Common myeloid progenitor, CD34-positive (primary cell): ENCODE measurements at regions of chr3 and their contacts with region 1.

Region 1: GRCh38 chr3:88003115-88003755 is 55.6 kb downstream of the CGGBP1 start:
- DNase-seq: peak; percentile 77 to 81 (median 79)
- H3K4me3 ChIP-seq: no peak overlapping the region
- H3K27ac ChIP-seq: no peak overlapping the region
- H3K4me1 ChIP-seq: peaks cover 0 to 14% (median 13%) of the 10 kb centered on the region in 4 experiments
- H3K27me3 ChIP-seq: no peaks in the 10 kb centered on the region

Region 2: GRCh38 chr3:87260270-87260669 is 743.0 kb before region 1 on chr3:
- CTCF ChIA-PET with region 1: interaction called, 24 read pairs
- POLR2A ChIA-PET with region 1: no interaction called
- DNase-seq: peak; percentile 68 to 79 (median 73)
- H3K4me3 ChIP-seq: no peak overlapping the region
- H3K27ac ChIP-seq: no peak overlapping the region
- H3K4me1 ChIP-seq: peaks cover 0 to 2% (median 0%) of the 10 kb centered on the region in 4 experiments
- H3K27me3 ChIP-seq: no peaks in the 10 kb centered on the region

Region 3: DNA sequence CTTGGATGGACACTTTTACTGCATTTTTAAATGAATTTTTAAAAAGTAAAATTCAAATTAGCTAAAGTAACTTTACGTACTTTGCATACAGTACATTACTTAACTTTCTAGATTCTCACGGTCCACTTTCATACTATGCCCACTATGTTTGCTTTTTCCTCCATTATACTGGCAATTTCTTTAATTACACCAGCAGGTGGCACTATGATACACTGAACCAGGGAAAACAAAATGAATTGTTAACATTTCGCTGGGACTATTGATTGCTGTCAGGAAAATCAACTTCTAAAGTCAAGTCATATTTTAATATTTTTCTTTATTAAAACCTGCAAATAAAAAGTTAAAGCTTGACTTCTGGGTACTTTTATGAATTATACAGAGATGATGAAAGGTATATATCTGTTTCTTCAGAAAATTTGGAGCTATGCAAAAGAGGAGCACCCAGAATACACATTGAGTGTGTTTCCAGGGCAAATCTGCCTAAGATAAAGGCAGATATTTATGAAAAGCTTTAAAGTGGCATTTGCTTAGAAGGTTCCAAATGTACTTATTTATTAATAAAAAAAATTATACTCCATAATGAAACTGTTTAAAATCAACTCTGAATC is 705.0 kb before region 1 on chr3:
- CTCF ChIA-PET with region 1: interaction called, 21 read pairs
- POLR2A ChIA-PET with region 1: no interaction called
- DNase-seq: peak; percentile 45 to 57 (median 57)
- H3K4me3 ChIP-seq: no peak overlapping the region
- H3K27ac ChIP-seq: no peak overlapping the region
- H3K4me1 ChIP-seq: peaks cover 0 to 2% (median under 1%) of the 10 kb centered on the region in 4 experiments
- H3K27me3 ChIP-seq: no peaks in the 10 kb centered on the region

Region 4: GRCh38 chr3:87350364-87351199 is 652.7 kb before region 1 on chr3:
- CTCF ChIA-PET with region 1: interaction called, 26 read pairs
- POLR2A ChIA-PET with region 1: no interaction called
- DNase-seq: peak; percentile 59 to 78 (median 76)
- H3K4me3 ChIP-seq: no peak overlapping the region
- H3K27ac ChIP-seq: no peak overlapping the region
- H3K4me1 ChIP-seq: no peaks in the 10 kb centered on the region
- H3K27me3 ChIP-seq: no peaks in the 10 kb centered on the region

Region 5: DNA sequence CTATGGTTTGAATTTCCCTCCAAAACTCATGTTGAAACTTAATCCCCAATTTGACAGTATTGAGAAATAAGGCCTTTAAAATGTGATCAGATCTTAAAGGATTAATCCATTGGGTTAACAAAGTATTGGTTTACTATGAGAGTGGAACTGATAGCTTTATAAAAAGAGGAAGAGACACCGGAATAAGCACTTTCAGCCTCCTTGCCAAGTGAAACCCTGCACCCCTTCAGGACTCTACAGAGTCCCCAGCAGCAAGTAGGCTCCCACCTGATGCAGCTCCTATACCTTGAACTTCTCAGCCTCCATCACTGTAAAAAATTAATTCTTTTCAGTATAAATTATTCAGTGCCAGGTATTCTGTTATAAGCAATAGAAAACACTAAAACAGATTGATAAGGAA is 292.7 kb before region 1 on chr3:
- CTCF ChIA-PET with region 1: no interaction called
- POLR2A ChIA-PET with region 1: no interaction called
- DNase-seq: no peak
- H3K4me3 ChIP-seq: no peak overlapping the region
- H3K27ac ChIP-seq: no peak overlapping the region
- H3K4me1 ChIP-seq: no peaks in the 10 kb centered on the region
- H3K27me3 ChIP-seq: no peaks in the 10 kb centered on the region

Region 6: GRCh38 chr3:87792534-87793336 is 210.5 kb before region 1 on chr3:
- CTCF ChIA-PET with region 1: interaction called, 13 read pairs
- POLR2A ChIA-PET with region 1: interaction called, 4 read pairs
- DNase-seq: peak; percentile 91 to 95 (median 93)
- H3K4me3 ChIP-seq: peak within 1 kb of the TSS; percentile 78 to 97 (median 96)
- H3K27ac ChIP-seq: peak within 1 kb of the TSS; percentile 88 to 96
- H3K4me1 ChIP-seq: peaks cover 21 to 67% (median 36%) of the 10 kb centered on the region in 4 experiments
- H3K27me3 ChIP-seq: no peaks in the 10 kb centered on the region

Region 7: DNA sequence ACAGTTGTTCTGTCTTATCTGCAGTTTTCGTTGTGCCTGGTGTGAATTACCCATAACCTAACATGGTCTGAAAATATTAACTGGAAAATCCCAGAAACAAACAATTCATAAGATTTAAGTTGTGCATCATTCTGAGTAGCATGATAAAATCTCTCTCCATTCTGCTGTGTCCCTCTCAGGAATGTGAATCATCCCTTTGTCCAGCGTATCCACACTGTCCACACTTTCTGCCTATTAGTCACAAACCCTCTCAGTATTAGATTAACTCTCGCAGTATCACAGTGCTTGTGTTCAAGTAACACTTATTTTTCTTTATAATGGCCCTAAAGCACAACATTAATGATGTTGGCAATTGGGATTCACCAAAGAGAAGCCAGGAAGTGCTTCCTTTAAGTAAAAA is 147.6 kb before region 1 on chr3:
- CTCF ChIA-PET with region 1: no interaction called
- POLR2A ChIA-PET with region 1: no interaction called
- DNase-seq: no peak
- H3K4me3 ChIP-seq: no peak overlapping the region
- H3K27ac ChIP-seq: no peak overlapping the region
- H3K4me1 ChIP-seq: peaks cover 13 to 27% (median 20%) of the 10 kb centered on the region in 4 experiments
- H3K27me3 ChIP-seq: no peaks in the 10 kb centered on the region

Region 8: GRCh38 chr3:88113311-88114162 is 110.3 kb after region 1 on chr3:
- CTCF ChIA-PET with region 1: interaction called, 12 read pairs
- POLR2A ChIA-PET with region 1: no interaction called
- DNase-seq: peak; percentile 81 to 89 (median 83)
- H3K4me3 ChIP-seq: no peak overlapping the region
- H3K27ac ChIP-seq: no peak overlapping the region
- H3K4me1 ChIP-seq: peaks cover 0 to 2% (median 0%) of the 10 kb centered on the region in 4 experiments
- H3K27me3 ChIP-seq: no peaks in the 10 kb centered on the region